BJ (cell line): ENCODE measurements at regions of chr1 and their contacts with region 1.

Region 1: DNA sequence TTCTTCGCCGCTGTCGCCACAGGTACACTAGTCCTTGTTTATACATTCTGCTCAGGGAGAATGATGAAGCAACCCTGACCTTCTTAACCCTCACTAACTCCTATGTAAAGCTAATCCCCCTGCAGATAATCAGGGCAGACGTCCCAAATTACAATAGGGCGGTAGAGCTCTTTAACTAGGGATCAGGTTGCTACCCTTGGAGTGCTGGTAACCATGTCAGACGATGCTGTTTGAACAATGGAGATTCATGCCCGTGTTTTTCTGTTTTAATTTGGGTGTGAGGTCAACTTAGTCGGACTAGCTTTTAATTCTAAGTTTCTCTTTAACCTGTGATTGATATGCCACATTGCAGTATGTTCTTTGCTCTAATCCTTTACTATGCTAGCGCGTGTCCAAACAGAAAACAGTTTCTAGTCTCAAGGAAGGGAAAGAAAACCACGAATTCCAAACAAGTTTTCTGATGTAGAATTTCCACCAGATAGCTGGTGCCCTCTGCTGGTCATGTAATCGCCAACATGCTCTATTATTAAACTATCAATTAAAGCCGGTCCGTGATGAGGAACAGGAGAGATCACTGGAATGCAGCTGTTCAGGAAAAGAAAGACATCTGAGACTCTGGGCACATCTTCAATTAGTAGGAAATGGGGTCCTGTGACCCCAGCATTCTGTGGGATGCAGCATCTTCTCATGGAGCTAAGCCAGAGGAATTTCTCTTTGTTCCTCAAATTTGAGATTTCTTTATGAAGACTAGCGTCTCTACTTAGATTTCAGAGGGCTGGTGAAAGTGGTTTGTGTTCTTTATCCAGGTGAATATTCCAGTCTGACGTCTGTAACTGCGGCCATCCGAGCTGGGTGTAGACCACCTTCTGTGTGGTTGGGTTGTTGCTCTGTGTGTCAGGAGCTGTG is 18.3 kb upstream of the VAMP3 start:
- DNase-seq: peak; percentile 15
- H3K4me3 ChIP-seq: peak overlapping the region; percentile 23
- H3K27me3 ChIP-seq: no peaks in the 10 kb centered on the region; the same call in 1 of the 2 replicates
- CTCF ChIP-seq: peak; percentile 76

Region 2: GRCh38 chr1:7680207-7680954 is 72.4 kb before region 1 on chr1:
- CTCF ChIA-PET with region 1: interaction called, 45 read pairs
- POLR2A ChIA-PET with region 1: no interaction called
- DNase-seq: no peak
- H3K4me3 ChIP-seq: peak overlapping the region; percentile 71
- H3K27me3 ChIP-seq: peaks cover 3% of the 10 kb centered on the region; the same call in 1 of the 2 replicates
- CTCF ChIP-seq: no peak

Region 3: GRCh38 chr1:7717744-7718368 is 34.9 kb before region 1 on chr1:
- CTCF ChIA-PET with region 1: interaction called, 10 read pairs
- POLR2A ChIA-PET with region 1: no interaction called
- DNase-seq: no peak
- H3K4me3 ChIP-seq: no peak overlapping the region
- H3K27me3 ChIP-seq: 0 out of 2 replicates have a peak, but pooled peaks cover 4% of the 10 kb centered on the region
- CTCF ChIP-seq: no peak

Region 4: DNA sequence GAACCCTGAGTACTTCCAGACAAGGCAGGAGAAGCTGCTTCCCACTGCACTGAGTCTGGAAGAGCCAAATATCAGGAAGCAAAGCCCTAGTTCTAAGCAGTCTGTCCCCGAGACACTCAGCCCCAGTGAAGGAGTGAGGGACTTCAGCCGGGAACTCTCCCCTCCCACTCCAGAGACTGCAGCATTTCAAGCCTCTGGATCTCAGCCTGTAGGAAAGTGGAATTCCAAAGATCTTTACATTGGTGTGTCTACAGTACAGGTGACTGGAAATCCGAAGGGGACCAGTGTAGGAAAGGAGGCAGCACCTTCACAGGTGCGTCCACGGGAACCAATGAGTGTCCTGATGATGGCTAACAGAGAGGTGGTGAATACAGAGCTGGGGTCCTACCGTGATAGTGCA is 14.7 kb before region 1 on chr1:
- CTCF ChIA-PET with region 1: interaction called, 21 read pairs
- POLR2A ChIA-PET with region 1: no interaction called
- DNase-seq: no peak
- H3K4me3 ChIP-seq: no peak overlapping the region
- H3K27me3 ChIP-seq: no peaks in the 10 kb centered on the region; the same call in 1 of the 2 replicates
- CTCF ChIP-seq: no peak

Region 5: DNA sequence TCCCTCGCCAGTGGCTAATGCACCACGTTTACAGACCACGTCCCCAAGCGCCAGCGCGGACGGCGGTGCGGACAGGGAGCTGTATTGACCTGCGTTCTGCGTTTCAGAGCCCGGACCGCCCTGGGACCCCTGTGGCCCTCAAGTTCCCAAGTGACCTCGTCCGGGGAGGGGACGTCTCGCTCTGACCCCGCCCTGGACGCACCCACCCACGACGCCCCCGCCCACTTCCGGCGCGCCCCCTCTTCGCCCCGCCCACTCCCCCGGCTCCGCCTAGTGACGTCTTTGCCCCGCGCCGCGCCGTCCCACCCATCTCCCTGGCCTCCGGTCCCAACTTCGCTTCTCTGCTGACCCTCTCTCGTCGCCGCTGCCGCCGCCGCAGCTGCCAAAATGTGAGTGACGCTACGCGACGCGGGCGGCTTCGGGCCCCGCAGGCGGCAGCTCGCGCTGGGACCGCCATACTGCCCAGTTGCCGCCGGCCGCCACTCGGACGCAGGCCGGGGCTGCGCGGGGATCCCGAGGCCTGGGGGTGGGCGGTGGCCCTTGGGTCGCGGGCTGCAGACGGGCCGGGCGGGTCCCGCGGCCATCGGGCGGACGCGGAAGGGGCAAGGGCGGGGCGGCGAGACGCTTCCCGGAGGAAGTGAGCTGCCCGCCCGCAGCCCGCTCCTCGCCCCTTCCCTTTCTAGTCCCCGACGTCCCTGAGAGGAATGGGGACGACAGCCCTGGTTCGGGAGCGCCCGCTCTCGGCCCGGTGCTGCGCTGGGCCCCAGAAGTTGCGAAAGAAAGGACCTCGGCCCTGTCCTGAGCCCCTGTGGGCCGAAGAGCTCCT is 18.4 kb after region 1 on chr1 and contains the start of gene VAMP3:
- CTCF ChIA-PET with region 1: interaction called, 16 read pairs
- POLR2A ChIA-PET with region 1: no interaction called
- DNase-seq: no peak
- H3K4me3 ChIP-seq: peak within 1 kb of the TSS; percentile 65
- H3K27me3 ChIP-seq: no peaks in the 10 kb centered on the region
- CTCF ChIP-seq: no peak
- polyA plus RNA-seq, gene VAMP3: 106 and 162 TPM in 2 replicates

Region 6: DNA sequence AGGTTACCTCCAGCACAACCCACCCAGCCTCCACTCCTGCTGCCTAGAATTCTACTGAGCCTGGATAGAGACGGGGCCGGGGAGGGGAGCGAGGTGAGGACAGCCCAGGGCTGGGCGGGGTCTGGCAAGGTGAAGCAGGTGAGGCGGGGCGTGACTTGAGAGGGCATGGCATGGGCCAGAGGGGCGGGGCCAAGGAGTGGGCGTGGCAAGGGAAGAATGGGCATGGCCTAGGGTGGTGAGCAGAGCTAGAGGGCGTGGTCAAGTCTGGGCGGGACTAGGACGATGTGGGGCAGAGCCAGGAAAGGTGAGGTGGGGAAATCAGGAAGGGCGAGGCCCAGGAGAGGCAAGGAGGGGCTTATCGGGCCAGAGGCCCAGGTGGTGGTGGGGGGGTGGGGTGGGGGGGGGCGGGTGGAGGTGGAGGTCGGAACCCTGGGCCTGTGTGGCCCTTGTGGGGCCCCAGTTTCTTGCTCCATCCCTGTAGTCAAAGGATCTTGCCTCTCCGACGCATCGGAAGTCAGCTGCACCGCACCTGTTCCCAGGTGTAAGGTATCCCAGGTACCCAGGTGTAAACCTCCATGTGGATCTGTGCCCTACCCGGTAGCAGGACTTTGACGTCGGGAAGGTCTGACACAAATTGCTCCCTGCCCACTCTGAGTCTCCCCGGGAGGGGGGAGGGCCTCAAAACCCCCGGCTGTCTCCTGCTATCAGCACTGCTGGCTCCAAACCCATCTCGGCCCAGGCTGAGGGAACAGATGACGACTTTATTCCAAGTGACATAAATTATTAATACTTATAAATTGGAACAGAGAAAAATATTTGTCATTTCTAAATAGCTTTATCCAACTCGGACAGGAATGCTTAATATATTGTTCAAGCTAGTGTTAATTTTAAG is 133.0 kb after region 1 on chr1:
- CTCF ChIA-PET with region 1: no interaction called
- POLR2A ChIA-PET with region 1: no interaction called
- DNase-seq: no peak
- H3K4me3 ChIP-seq: no peak overlapping the region
- H3K27me3 ChIP-seq: no peaks in the 10 kb centered on the region; the same call in 1 of the 2 replicates
- CTCF ChIP-seq: no peak

Region 7: DNA sequence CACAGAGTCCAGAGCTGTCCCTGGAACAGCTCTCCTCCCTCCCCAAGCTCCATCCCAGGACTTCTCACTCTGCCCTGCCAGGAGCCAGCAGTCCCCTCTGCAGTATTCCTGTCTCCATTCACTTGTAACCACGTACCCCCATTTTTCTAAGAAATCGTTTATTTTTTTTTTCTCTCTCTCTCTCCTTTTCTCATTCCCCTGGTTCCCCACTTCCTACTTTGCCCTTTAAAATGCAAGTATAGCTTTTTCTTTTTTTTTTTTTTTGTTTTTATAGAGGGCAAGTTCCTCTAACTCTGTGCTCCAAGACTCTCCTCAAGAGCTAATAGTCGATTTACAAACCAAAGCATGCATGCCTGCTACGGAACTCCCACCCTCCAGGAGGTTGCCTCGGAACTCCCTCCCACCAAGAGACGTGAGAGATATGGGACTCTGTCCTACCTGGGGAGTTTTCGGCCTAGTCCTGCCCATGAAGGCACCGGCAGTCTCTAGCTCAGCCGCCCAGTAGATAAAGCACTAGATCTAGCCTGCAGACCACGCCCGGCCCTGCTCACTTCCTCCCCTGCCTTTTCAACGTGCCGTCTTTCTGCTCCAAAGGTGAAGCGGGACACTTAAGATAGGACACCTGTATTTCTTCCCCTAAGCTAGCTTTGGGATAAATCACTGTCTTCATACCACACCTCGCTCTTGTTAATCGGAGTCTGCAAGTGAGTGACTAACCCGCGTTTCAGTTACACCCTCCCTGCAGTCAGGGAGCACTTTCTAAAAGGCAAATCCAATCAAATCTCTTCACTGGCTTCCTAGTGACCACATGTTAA is 160.2 kb after region 1 on chr1:
- CTCF ChIA-PET with region 1: no interaction called
- POLR2A ChIA-PET with region 1: no interaction called
- DNase-seq: no peak
- H3K4me3 ChIP-seq: no peak overlapping the region
- H3K27me3 ChIP-seq: peaks cover 2% of the 10 kb centered on the region; the same call in 1 of the 2 replicates
- CTCF ChIP-seq: no peak